ENCODE measurements at regions of chr5 and their contacts with region 1.

Region 1: DNA sequence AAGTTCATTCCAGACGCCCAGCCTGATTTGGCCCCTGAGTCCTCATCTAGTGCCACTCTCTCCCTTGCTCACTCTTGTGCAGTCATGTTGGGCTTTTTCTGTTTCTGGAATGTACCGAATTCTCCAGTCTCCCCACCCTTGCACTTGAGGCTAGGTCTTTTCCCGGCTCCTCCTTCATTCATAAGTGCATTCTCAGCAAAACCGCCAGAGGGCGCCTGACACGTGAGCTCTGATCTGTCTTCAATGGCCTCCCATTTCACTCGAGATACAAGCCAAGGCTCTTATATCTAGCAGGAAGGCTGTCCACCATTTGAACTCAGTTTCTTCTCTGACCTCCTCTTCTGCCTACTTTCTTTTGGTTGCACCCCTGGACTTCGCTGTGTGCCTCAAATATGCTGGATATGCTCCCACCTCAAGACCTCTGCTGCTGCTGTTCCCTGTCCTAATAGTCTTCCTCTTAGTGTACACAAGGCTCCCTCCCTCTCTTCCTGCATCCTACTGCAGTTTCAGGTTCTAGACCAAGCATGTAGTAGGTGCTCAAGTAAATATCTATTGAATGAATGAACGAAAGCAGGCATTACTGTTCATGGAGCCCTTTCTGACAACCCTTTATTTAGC is 568.1 kb upstream of the WWC1 start:
- DNase-seq: peak; percentile 35
- ATAC-seq: peak; percentile 99
- H3K4me3 ChIP-seq: no peak overlapping the region
- H3K27ac ChIP-seq: no peak overlapping the region
- H3K4me1 ChIP-seq: no peaks in the 10 kb centered on the region
- H3K27me3 ChIP-seq: peaks cover 0 to 3% of the 10 kb centered on the region in 2 experiments; a peak in 2 of 4 replicates
- CTCF ChIP-seq: peak; percentile 85 to 90 (median 86)
- EP300 ChIP-seq: no peak
- POLR2A ChIP-seq: no peak
- RAD21 ChIP-seq: peak; percentile 73

Region 2: GRCh38 chr5:167653645-167654106 is 69.7 kb before region 1 on chr5:
- CTCF ChIA-PET with region 1: no interaction called
- POLR2A ChIA-PET with region 1: no interaction called
- RAD21 ChIA-PET with region 1: no interaction called
- SMC1A ChIA-PET with region 1: no interaction called
- in situ Hi-C with region 1: no loop called
- intact Hi-C with region 1: no loop called
- DNase-seq: no peak
- ATAC-seq: no peak
- H3K4me3 ChIP-seq: no peak overlapping the region
- H3K27ac ChIP-seq: no peak overlapping the region
- H3K4me1 ChIP-seq: no peaks in the 10 kb centered on the region
- H3K27me3 ChIP-seq: peaks cover 0 to 1% of the 10 kb centered on the region in 2 experiments; a peak in 1 of 4 replicates
- CTCF ChIP-seq: no peak
- EP300 ChIP-seq: no peak
- POLR2A ChIP-seq: no peak
- RAD21 ChIP-seq: no peak

Region 3: DNA sequence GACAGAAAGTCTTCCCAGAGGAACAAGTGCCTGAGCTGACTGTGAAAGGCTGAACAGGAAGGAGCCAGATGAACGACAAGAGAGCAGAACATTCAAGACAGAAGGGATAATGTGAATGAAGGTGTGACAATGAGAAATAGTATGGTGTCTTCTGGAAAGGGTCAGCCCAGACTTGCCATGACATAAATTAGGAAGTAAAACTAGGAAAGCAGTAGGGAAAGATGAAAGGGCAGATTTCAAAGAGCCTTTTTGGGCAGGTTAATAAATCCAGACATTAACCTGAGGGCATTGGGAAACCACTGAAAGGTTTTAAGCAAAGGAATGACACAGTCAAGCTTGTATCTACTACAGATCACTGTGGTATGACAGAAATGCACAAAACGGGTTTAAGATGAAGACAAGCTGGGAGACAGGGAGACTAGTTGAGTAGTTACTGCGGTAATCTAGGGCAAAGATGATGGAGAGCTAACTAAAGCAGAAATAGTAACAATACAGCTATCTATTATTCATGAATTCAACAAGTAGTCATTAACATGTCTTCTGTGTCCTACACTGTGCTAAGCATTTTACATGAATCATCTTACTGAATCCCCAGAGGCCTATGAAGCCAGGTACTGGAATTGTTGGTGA is 12.8 kb before region 1 on chr5:
- CTCF ChIA-PET with region 1: interaction called, 10 read pairs
- POLR2A ChIA-PET with region 1: no interaction called
- RAD21 ChIA-PET with region 1: interaction called, 3 read pairs
- SMC1A ChIA-PET with region 1: interaction called, 6 read pairs
- in situ Hi-C with region 1: no loop called
- intact Hi-C with region 1: no loop called
- DNase-seq: no peak
- ATAC-seq: no peak
- H3K4me3 ChIP-seq: no peak overlapping the region
- H3K27ac ChIP-seq: no peak overlapping the region
- H3K4me1 ChIP-seq: peaks cover 3% of the 10 kb centered on the region; the same call in 1 of the 2 replicates
- H3K27me3 ChIP-seq: no peaks in the 10 kb centered on the region; a peak in 1 of 4 replicates
- CTCF ChIP-seq: no peak
- EP300 ChIP-seq: no peak
- POLR2A ChIP-seq: no peak
- RAD21 ChIP-seq: no peak

Region 4: GRCh38 chr5:167969998-167970397 is 246.6 kb after region 1 on chr5:
- CTCF ChIA-PET with region 1: interaction called, 6 read pairs
- POLR2A ChIA-PET with region 1: no interaction called
- RAD21 ChIA-PET with region 1: no interaction called
- SMC1A ChIA-PET with region 1: interaction called, 3 read pairs
- in situ Hi-C with region 1: no loop called
- intact Hi-C with region 1: loop called (anchors 5 kb)
- DNase-seq: no peak
- ATAC-seq: peak; percentile 73
- H3K4me3 ChIP-seq: no peak overlapping the region; the same call in 1 of the 2 replicates
- H3K27ac ChIP-seq: no peak overlapping the region
- H3K4me1 ChIP-seq: no peaks in the 10 kb centered on the region; the same call in 1 of the 2 replicates
- H3K27me3 ChIP-seq: no peaks in the 10 kb centered on the region
- CTCF ChIP-seq: 0 out of 6 replicates have a peak, but pooled peaks of 1 of the 3 experiments have one; percentile 10
- EP300 ChIP-seq: no peak
- POLR2A ChIP-seq: no peak
- RAD21 ChIP-seq: peak; percentile 15; the same call in 1 of the 2 replicates

Region 5: GRCh38 chr5:168047043-168047668 is 323.8 kb after region 1 on chr5:
- CTCF ChIA-PET with region 1: interaction called, 7 read pairs
- POLR2A ChIA-PET with region 1: no interaction called
- RAD21 ChIA-PET with region 1: interaction called, 4 read pairs
- SMC1A ChIA-PET with region 1: interaction called, 4 read pairs
- in situ Hi-C with region 1: no loop called
- intact Hi-C with region 1: loop called (anchors 1 kb)
- DNase-seq: peak; percentile 3
- ATAC-seq: peak; percentile 76
- H3K4me3 ChIP-seq: no peak overlapping the region
- H3K27ac ChIP-seq: no peak overlapping the region
- H3K4me1 ChIP-seq: no peaks in the 10 kb centered on the region
- H3K27me3 ChIP-seq: no peaks in the 10 kb centered on the region; a peak in 1 of 4 replicates
- CTCF ChIP-seq: peak; percentile 47 to 58 (median 47); a peak in 5 of 6 replicates
- EP300 ChIP-seq: no peak
- POLR2A ChIP-seq: no peak
- RAD21 ChIP-seq: peak; percentile 57

Region 6: GRCh38 chr5:168219515-168220410 is 496.4 kb after region 1 on chr5:
- CTCF ChIA-PET with region 1: interaction called, 32 read pairs
- POLR2A ChIA-PET with region 1: no interaction called
- RAD21 ChIA-PET with region 1: interaction called, 9 read pairs
- SMC1A ChIA-PET with region 1: interaction called, 12 read pairs
- in situ Hi-C with region 1: loop called (anchors 5 kb)
- intact Hi-C with region 1: loop called (anchors 1 kb)
- DNase-seq: peak; percentile 68
- ATAC-seq: peak; percentile 90
- H3K4me3 ChIP-seq: no peak overlapping the region
- H3K27ac ChIP-seq: no peak overlapping the region
- H3K4me1 ChIP-seq: no peaks in the 10 kb centered on the region
- H3K27me3 ChIP-seq: peaks cover 0 to 1% of the 10 kb centered on the region in 2 experiments; a peak in 2 of 4 replicates
- CTCF ChIP-seq: peak; percentile 82 to 96 (median 94); a peak in 5 of 6 replicates
- EP300 ChIP-seq: no peak
- POLR2A ChIP-seq: no peak
- RAD21 ChIP-seq: peak; percentile 98

Measured in GM12878 (cell line).